OCI-LY7 (cell line): ENCODE measurements at regions of chr2 and their contacts with region 1.

Region 1: GRCh38 chr2:173210270-173211196 is 134.9 kb downstream of the MAP3K20 start:
- DNase-seq: peak; percentile 65
- H3K4me3 ChIP-seq: no peak overlapping the region
- H3K27ac ChIP-seq: no peak overlapping the region
- H3K4me1 ChIP-seq: no peaks in the 10 kb centered on the region
- CTCF ChIP-seq: peak; percentile 95

Region 2: GRCh38 chr2:173027181-173028128 is 183.1 kb before region 1 on chr2:
- CTCF ChIA-PET with region 1: interaction called, 6 read pairs
- POLR2A ChIA-PET with region 1: interaction called, 10 read pairs
- intact Hi-C with region 1: loop called (anchors 1 kb)
- DNase-seq: peak; percentile 85
- H3K4me3 ChIP-seq: no peak overlapping the region
- H3K27ac ChIP-seq: no peak overlapping the region
- H3K4me1 ChIP-seq: no peaks in the 10 kb centered on the region
- CTCF ChIP-seq: peak; percentile 99